Prostate gland (tissue), 2 donors: ENCODE measurements at regions of chr11 and their contacts with region 1.

Region 1: DNA sequence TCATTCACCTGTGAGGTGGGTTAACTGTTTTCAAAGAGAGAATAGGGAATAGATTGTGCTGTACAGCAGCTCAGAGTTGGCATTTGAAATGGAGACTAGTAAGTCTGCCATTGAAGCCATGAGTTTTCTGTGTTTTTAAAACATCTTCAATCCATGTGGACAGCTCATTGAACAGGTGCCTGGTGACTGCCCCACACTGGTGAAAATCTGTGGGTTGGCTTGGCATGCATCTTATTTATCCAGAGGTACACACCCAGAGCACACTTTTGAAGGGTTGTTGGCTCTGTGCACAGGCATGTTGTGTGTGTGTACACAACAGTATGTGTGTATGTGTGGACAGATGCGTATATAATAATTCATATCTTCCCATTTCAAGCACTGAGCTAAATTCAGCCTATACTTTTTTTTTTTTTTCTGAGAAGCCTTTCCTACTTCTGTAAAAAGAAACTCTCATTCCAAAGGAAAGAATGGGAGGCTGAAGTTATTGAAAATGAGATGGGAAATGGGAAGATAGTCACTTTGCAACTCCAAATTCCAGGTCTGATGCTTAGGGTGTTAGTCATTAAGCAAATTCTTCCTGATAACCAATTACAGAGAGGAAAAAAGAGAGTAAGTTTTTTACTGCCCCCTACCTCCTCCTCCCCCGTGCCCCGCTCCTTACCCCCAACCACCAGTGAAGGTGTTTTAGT is 7.0 kb upstream of the LYVE1 start:
- DNase-seq: no peak
- H3K4me3 ChIP-seq: no peak overlapping the region
- H3K27ac ChIP-seq: no peak overlapping the region
- H3K4me1 ChIP-seq: no peaks in the 10 kb centered on the region
- H3K27me3 ChIP-seq: no peaks in the 10 kb centered on the region
- CTCF ChIP-seq: no peak
- POLR2A ChIP-seq: no peak

Region 2: DNA sequence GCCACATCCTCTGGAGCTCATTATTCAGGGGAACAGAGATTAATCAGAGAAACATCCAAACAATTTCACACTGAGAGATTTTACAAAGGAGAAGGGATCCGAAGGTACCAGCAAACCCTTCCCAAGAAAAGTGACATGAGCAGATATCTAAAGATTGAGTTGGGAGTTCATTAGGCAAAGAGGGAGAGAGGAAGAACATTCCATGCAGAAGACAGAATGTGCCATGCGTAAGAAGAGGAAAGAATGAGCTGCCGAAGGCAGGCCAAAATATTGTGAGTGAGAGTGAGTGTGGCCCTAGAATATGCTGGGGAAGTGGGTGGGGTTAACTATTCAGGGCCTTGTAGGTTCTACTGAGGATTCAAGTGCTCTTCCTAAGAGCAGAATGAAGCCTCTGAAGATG is 43.0 kb after region 1 on chr11:
- intact Hi-C with region 1: loop called (anchors 2 kb)
- DNase-seq: no peak
- H3K4me3 ChIP-seq: no peak overlapping the region
- H3K27ac ChIP-seq: peak overlapping the region; percentile 1 to 48
- H3K4me1 ChIP-seq: no peaks in the 10 kb centered on the region
- H3K27me3 ChIP-seq: no peaks in the 10 kb centered on the region
- CTCF ChIP-seq: no peak
- POLR2A ChIP-seq: no peak

Region 3: DNA sequence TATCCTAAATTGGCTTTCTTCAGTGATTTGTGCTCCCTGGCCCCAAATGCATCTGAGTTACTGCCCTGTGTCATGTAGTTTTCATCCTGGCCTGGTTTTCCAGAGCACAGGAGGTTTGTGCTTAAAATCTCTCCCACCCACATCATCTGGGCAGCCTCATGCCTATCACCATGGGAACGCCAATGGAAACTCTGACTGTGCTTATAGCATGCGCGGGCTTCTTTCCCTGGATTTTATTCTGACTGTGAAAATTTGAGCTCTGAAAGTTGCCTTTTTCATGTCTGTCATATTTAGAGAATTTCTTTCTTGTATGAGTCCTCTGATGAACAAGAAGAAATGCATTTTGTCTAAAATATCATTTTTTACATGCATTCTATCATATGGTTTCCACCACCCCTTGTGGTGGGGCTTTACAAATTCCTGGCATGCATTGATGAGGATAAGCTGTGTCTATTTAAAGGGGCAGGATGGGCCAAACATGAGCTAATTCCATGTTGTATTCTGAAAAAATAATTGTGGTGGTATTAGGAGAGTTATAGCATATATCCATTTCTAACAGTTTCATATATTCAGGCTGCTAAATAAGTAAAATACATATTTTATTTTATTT is 62.9 kb after region 1 on chr11:
- intact Hi-C with region 1: no loop called
- DNase-seq: no peak
- H3K4me3 ChIP-seq: no peak overlapping the region
- H3K27ac ChIP-seq: no peak overlapping the region
- H3K4me1 ChIP-seq: no peaks in the 10 kb centered on the region
- H3K27me3 ChIP-seq: no peaks in the 10 kb centered on the region
- CTCF ChIP-seq: no peak
- POLR2A ChIP-seq: no peak

Region 4: GRCh38 chr11:10701982-10702381 is 126.5 kb after region 1 on chr11:
- intact Hi-C with region 1: no loop called
- DNase-seq: no peak
- H3K4me3 ChIP-seq: no peak overlapping the region
- H3K27ac ChIP-seq: no peak overlapping the region
- H3K4me1 ChIP-seq: no peaks in the 10 kb centered on the region
- H3K27me3 ChIP-seq: no peaks in the 10 kb centered on the region
- CTCF ChIP-seq: no peak
- POLR2A ChIP-seq: no peak

Region 5: GRCh38 chr11:10844356-10844755 is 268.9 kb after region 1 on chr11:
- intact Hi-C with region 1: no loop called
- DNase-seq: no peak
- H3K4me3 ChIP-seq: no peak overlapping the region
- H3K27ac ChIP-seq: no peak overlapping the region
- H3K4me1 ChIP-seq: no peaks in the 10 kb centered on the region
- H3K27me3 ChIP-seq: no peaks in the 10 kb centered on the region
- CTCF ChIP-seq: no peak
- POLR2A ChIP-seq: no peak